ENCODE measurements at regions of chr5 and their contacts with region 1.

Region 1: DNA sequence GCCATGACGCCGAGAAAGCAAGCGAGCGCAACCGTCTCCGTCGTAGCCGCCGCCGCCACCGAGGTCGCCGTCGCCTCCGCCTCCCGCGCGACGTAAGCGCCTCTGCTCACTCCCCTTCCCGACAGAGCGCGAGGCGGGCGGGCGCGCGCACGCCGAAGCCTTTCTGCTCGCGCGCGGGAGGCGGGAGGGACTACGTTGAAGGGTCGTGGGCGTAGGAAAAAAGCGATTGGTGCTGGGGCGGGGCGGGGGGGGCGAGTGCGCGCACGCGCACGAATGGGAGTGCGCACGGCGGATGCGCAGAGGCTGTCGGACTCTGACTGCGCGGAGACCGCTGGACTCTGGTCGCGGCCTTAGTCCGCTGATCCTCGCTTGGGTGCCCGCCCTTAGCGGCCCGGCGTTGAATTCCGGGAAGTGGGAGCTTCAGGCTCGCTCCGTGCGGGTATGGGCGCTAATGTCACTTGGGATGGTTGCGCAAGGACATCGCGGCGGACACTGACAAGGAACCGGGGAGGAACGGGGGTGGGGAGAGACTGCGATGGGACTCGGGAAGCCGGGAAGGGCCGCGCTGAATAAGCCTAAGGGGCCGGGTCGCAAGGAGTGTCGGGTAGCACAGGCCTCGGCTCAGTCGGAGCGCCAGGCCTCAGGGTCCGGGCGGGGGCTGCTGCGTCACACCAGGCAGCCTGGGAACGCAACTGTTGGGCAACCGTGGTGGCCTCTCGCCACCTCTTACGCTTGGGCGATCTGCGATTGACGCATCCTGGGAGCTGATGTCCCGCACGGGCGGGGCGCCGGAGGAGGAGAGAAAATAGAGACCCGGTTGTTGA is at the start of gene CHD1:
- DNase-seq: peak; percentile 97
- H3K4me3 Mint-ChIP-seq: peak within 1 kb of the TSS; percentile 78
- H3K27ac Mint-ChIP-seq: peak within 1 kb of the TSS; percentile 92
- H3K4me1 Mint-ChIP-seq: peaks cover 12% of the 10 kb centered on the region
- H3K27me3 Mint-ChIP-seq: no peaks in the 10 kb centered on the region
- CTCF ChIP-seq: no peak
- total RNA-seq, gene CHD1: 79.7 and 91.6 TPM in 2 replicates

Region 2: DNA sequence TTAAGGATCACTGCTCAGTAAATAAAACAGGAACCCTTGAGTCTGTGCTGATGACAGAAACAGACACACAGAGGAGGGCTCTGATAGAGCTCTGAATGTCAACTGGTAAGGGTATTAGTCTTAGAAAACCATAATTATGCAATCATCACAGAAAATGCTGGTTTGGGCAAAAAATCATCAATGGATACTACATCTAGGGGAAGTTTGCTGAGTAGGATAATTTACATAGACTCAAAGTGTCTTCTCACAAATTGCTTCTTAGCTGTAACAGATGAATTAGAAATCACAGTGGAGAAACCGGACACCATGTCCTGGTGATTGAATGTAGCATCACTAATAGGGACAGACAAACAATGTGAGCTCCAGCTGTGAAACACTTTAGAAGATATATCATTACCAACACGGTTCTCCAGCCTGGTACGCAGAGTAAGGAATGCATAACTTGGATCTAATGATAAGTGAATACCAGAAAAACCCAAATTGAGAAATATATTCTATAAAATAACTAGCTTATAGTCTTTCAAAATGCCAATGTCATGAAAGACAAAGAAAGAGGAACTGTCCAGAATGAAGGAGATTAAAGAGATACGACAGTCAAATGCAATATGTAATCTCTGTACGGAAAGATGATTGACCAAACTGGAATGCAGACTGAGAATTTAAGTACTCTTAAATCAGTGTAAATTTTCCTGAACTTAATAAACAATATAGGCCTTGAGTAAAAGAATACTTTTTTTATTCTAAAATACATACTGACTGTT is 17.6 kb before region 1 on chr5:
- CTCF ChIA-PET with region 1: no interaction called
- intact Hi-C with region 1: loop called (anchors 2 kb)
- DNase-seq: no peak
- H3K4me3 Mint-ChIP-seq: no peak overlapping the region
- H3K27ac Mint-ChIP-seq: no peak overlapping the region
- H3K4me1 Mint-ChIP-seq: peaks cover 56% of the 10 kb centered on the region
- H3K27me3 Mint-ChIP-seq: no peaks in the 10 kb centered on the region
- CTCF ChIP-seq: no peak

Region 3: GRCh38 chr5:99032234-99033013 is 103.3 kb after region 1 on chr5:
- CTCF ChIA-PET with region 1: interaction called, 6 read pairs
- intact Hi-C with region 1: loop called (anchors 1 kb)
- DNase-seq: peak; percentile 80
- H3K4me3 Mint-ChIP-seq: peak overlapping the region; percentile 62
- H3K27ac Mint-ChIP-seq: peak overlapping the region; percentile 64
- H3K4me1 Mint-ChIP-seq: peaks cover 50% of the 10 kb centered on the region
- H3K27me3 Mint-ChIP-seq: no peaks in the 10 kb centered on the region
- CTCF ChIP-seq: peak; percentile 81

Measured in Calu3 (cell line).